ENCODE measurements at regions of chr11 and their contacts with region 1.

Region 1: GRCh38 chr11:106925245-106925644 is 93.0 kb downstream of the GUCY1A2 start:
- DNase-seq: no peak
- H3K4me3 Mint-ChIP-seq: no peak overlapping the region
- H3K27ac Mint-ChIP-seq: no peak overlapping the region
- H3K4me1 Mint-ChIP-seq: no peaks in the 10 kb centered on the region
- H3K27me3 Mint-ChIP-seq: no peaks in the 10 kb centered on the region

Region 2: DNA sequence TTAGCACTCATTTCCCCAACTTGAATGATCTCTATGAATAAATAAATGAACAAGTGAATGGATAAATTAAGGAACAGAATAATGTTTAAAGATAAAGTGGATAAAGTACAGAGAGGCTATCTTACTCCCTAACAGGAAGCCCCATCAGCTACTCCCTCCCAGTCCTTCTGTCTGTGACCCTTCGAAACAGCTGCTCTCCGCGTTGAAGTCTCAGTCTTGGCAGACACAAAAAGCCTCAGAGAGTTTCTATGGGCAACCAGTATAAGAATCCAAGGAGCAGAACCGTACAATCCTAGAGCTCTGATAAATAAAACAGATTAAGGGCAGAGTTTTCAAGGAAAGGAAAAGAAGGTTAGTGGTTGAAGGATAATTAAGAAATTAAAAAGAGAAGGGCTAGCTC is 58.0 kb after region 1 on chr11:
- CTCF ChIA-PET with region 1: no interaction called
- POLR2A ChIA-PET with region 1: no interaction called
- intact Hi-C with region 1: loop called (anchors 5 kb)
- DNase-seq: no peak
- H3K4me3 Mint-ChIP-seq: no peak overlapping the region
- H3K27ac Mint-ChIP-seq: no peak overlapping the region
- H3K4me1 Mint-ChIP-seq: no peaks in the 10 kb centered on the region
- H3K27me3 Mint-ChIP-seq: no peaks in the 10 kb centered on the region

Measured in activated CD4-positive, alpha-beta memory T cell treated with anti-CD3 and anti-CD28 coated beads for 36 hours (primary cell).